GM12878 (cell line): ENCODE measurements at regions of chr1 and their contacts with region 1.

Region 1: DNA sequence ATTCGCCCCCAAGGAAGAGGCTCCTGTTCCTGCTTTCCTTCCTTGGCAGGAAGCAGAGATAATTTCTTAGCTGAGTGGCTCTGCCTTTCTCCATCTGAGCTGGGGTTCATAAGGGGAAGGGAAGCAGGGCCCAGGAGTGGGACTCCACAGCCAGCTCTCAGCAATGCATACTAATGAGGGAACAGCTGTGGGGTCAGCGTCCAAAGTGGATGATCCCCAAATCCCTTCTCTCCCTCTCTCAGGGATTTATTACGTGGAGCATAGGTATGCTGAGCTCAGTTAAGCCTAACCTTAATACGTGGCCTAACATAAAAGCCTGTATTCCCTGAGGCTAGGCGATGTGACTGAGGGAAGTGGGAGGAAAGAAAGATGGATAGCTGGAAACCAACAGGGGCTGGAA is 87.3 kb upstream of the CTTNBP2NL start:
- DNase-seq: no peak
- ATAC-seq: no peak
- H3K4me3 ChIP-seq: no peak overlapping the region
- H3K27ac ChIP-seq: no peak overlapping the region
- H3K4me1 ChIP-seq: no peaks in the 10 kb centered on the region
- H3K27me3 ChIP-seq: peaks cover 0 to 2% of the 10 kb centered on the region in 2 experiments; a peak in 1 of 4 replicates
- CTCF ChIP-seq: no peak
- EP300 ChIP-seq: no peak
- POLR2A ChIP-seq: no peak
- RAD21 ChIP-seq: no peak

Region 2: GRCh38 chr1:112026018-112026417 is 282.7 kb before region 1 on chr1:
- CTCF ChIA-PET with region 1: no interaction called
- POLR2A ChIA-PET with region 1: no interaction called
- RAD21 ChIA-PET with region 1: no interaction called
- SMC1A ChIA-PET with region 1: no interaction called
- in situ Hi-C with region 1: no loop called
- intact Hi-C with region 1: loop called (anchors 10 kb)
- DNase-seq: no peak
- ATAC-seq: no peak
- H3K4me3 ChIP-seq: no peak overlapping the region
- H3K27ac ChIP-seq: no peak overlapping the region
- H3K4me1 ChIP-seq: no peaks in the 10 kb centered on the region
- H3K27me3 ChIP-seq: no peaks in the 10 kb centered on the region; a peak in 2 of 4 replicates
- CTCF ChIP-seq: no peak
- EP300 ChIP-seq: no peak
- POLR2A ChIP-seq: no peak
- RAD21 ChIP-seq: no peak

Region 3: GRCh38 chr1:112247036-112247597 is 61.6 kb before region 1 on chr1:
- CTCF ChIA-PET with region 1: no interaction called
- POLR2A ChIA-PET with region 1: no interaction called
- RAD21 ChIA-PET with region 1: no interaction called
- SMC1A ChIA-PET with region 1: no interaction called
- in situ Hi-C with region 1: no loop called
- intact Hi-C with region 1: no loop called
- DNase-seq: no peak
- ATAC-seq: no peak
- H3K4me3 ChIP-seq: no peak overlapping the region
- H3K27ac ChIP-seq: no peak overlapping the region
- H3K4me1 ChIP-seq: no peaks in the 10 kb centered on the region
- H3K27me3 ChIP-seq: 0 out of 4 replicates have a peak, but pooled peaks cover 0 to 3% of the 10 kb centered on the region in 2 experiments
- CTCF ChIP-seq: no peak
- EP300 ChIP-seq: no peak
- POLR2A ChIP-seq: no peak
- RAD21 ChIP-seq: no peak

Region 4: GRCh38 chr1:112328600-112328999 is 19.9 kb after region 1 on chr1:
- CTCF ChIA-PET with region 1: no interaction called
- POLR2A ChIA-PET with region 1: no interaction called
- RAD21 ChIA-PET with region 1: no interaction called
- SMC1A ChIA-PET with region 1: no interaction called
- in situ Hi-C with region 1: no loop called
- intact Hi-C with region 1: no loop called
- DNase-seq: no peak
- ATAC-seq: no peak
- H3K4me3 ChIP-seq: no peak overlapping the region
- H3K27ac ChIP-seq: no peak overlapping the region
- H3K4me1 ChIP-seq: no peaks in the 10 kb centered on the region
- H3K27me3 ChIP-seq: peaks cover 0 to 2% of the 10 kb centered on the region in 2 experiments; a peak in 3 of 4 replicates
- CTCF ChIP-seq: no peak
- EP300 ChIP-seq: no peak
- POLR2A ChIP-seq: no peak
- RAD21 ChIP-seq: no peak